ENCODE measurements at regions of chr1 and their contacts with region 1.

Region 1: DNA sequence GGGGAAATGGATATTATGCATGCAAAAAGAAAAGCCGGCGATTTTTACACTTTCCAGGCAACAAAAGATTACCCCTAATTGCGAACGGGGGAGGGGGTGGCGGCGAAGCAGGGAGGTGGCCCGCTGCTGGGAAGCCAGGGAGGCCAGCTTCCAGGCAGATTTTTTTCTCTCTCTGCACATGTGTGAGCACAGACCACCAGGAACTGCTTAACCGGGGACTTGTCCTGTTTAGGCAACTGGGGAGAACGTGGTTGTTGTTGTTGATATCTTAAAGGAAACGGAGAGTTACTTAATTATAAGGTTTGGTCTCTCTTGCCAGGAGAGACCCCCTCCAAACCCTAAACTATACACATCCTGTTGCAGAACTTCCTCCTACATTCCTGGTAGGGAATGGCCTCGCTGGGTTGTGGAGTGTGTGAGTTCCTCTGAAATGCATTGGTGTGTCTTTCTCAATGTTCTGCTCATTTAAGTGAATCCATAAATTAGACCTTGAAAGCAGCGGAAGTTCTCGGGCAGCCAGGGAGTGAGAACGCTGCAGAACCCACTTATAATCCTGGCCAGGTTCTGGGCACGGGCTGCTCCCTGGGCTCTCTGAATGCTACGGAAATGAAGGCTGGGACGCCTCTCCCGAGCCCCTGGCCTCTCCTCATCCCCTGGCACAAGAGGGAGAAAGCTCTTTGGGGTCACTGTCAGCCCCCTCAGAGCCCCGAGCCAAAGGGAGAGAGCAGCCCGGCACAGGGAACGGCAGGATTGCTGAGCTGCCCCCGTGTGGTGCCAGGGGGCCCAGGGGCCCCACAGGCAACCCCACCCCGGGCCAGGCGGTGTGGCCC is 250.0 kb downstream of the FOXD2 start:
- DNase-seq: no peak

Region 2: DNA sequence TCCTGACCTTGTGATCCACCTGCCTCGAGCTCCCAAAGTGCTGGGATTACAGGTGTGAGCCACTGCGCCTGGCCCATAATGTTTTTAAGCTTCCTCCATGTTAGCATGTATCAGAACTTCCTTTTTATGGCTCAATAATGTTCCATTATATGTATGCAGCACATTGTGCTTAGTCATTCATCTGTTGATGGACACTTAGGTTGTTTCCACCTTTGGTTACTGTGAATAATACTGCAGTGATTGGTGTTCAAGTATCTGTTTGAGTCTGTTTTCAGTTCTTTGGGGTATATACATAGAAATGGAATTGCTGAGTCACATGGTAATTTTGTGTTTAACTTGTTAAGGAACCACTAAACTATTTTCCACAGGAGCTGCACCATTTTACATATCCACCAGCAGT is 336.5 kb before region 1 on chr1:
- intact Hi-C with region 1: loop called in 1 of 2 experiments (anchors 2 kb)
- DNase-seq: no peak

Measured in posterior vena cava (tissue), 2 donors.